ENCODE measurements at regions of chr2 and their contacts with region 1.

Region 1: DNA sequence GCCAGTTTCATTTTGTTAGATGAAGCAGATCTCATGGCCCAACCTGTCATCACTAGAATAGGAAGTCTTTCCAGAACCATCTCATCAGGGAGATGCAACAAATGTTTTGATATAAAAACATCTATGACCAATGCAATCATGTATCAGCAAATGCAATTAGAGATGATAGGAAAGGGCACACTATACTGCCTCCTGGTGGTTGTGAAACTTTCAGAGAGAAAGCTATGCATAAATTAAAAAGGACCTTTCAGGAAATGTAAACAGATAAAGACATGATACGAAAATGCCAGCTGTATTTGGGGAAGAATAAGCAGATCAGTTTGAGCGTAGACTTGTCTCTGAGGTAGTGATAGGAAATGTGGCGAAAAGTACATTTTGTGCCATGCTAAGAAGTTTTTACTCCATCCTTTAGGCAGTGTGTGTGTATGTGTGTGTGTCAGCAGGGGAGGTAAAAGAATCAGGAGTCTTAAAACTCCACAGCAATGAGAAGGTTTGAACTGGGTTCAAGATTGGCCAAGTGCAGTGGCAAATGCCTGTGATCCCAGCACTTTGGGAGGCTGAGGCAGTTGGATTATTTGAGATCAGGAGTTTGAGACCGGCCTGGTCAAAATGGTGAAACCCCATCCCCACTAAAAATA is 479.3 kb downstream of the CPS1 start:
- DNase-seq: peak; percentile 53
- H3K4me3 ChIP-seq: no peak overlapping the region
- H3K27ac ChIP-seq: no peak overlapping the region
- H3K4me1 ChIP-seq: no peaks in the 10 kb centered on the region
- H3K27me3 ChIP-seq: no peaks in the 10 kb centered on the region
- CTCF ChIP-seq: peak; percentile 43 to 56
- POLR2A ChIP-seq: no peak

Region 2: GRCh38 chr2:210503001-210503623 is 532.6 kb before region 1 on chr2:
- CTCF ChIA-PET with region 1: interaction called, 26 read pairs
- POLR2A ChIA-PET with region 1: no interaction called
- dilution Hi-C with region 1: no loop called
- intact Hi-C with region 1: loop called (anchors 5 kb)
- DNase-seq: peak; percentile 55
- H3K4me3 ChIP-seq: peak overlapping the region in 1 of 3 experiments; percentile 16
- H3K27ac ChIP-seq: no peak overlapping the region
- H3K4me1 ChIP-seq: no peaks in the 10 kb centered on the region
- H3K27me3 ChIP-seq: peaks cover 0 to 8% of the 10 kb centered on the region in 2 experiments
- CTCF ChIP-seq: peak; percentile 76 to 89
- POLR2A ChIP-seq: no peak

Region 3: DNA sequence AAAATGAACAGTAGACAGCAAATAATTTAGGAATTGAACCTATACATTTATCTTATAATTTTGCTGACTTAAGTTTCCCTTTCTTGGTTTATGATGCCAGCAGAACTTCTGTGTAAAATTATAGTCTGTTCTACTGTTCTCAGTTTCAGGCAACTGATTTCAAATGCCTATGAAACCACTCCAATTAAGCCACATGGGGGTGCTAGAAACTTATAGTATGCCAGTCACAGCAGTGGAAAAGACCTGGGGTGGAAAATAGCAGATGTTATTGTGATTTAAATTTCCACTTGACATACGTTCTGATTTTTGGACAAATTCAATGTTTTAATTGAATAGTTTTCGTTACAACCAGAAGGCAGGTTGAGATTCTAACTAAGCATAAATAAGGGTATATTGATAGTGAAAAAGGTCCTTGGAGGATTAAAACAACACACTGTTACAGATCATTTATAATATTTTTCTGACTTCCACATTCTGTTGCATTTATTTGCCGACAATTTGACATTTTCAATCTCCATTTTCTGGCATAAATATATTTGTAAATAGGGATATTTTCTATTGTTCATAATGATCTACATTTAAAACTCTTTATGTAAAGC is 417.8 kb before region 1 on chr2:
- CTCF ChIA-PET with region 1: interaction called, 89 read pairs
- POLR2A ChIA-PET with region 1: no interaction called
- dilution Hi-C with region 1: no loop called
- intact Hi-C with region 1: loop called (anchors 1 kb)
- DNase-seq: peak; percentile 37
- H3K4me3 ChIP-seq: no peak overlapping the region
- H3K27ac ChIP-seq: no peak overlapping the region
- H3K4me1 ChIP-seq: no peaks in the 10 kb centered on the region
- H3K27me3 ChIP-seq: no peaks in the 10 kb centered on the region
- CTCF ChIP-seq: peak; percentile 33 to 52
- POLR2A ChIP-seq: no peak

Region 4: DNA sequence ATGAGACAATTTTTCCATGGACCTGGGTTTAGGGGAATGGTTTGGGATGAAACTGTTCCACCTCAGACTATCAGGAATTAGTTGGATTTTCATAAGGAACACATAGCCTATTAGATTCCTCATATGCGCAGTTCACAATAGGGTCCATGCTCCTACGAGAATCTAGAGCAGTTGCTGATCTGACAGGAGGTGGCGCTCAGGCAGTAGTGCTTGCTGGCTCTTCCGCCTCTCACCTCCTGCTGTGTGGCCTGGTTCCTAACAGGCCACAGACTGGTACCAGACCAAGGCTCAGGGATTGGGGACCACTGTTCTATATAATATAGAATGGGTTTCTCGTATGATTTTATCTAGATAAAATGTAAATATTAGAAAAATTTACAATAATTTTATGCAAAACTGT is 140.5 kb before region 1 on chr2:
- CTCF ChIA-PET with region 1: interaction called, 3 read pairs
- POLR2A ChIA-PET with region 1: no interaction called
- dilution Hi-C with region 1: no loop called
- intact Hi-C with region 1: loop called (anchors 1 kb)
- DNase-seq: no peak
- H3K4me3 ChIP-seq: no peak overlapping the region
- H3K27ac ChIP-seq: no peak overlapping the region
- H3K4me1 ChIP-seq: no peaks in the 10 kb centered on the region
- H3K27me3 ChIP-seq: no peaks in the 10 kb centered on the region
- CTCF ChIP-seq: no peak
- POLR2A ChIP-seq: no peak

Region 5: GRCh38 chr2:211049321-211050018 is 13.8 kb after region 1 on chr2:
- CTCF ChIA-PET with region 1: interaction called, 22 read pairs
- POLR2A ChIA-PET with region 1: no interaction called
- dilution Hi-C with region 1: no loop called
- intact Hi-C with region 1: no loop called
- DNase-seq: no peak
- H3K4me3 ChIP-seq: no peak overlapping the region
- H3K27ac ChIP-seq: no peak overlapping the region
- H3K4me1 ChIP-seq: no peaks in the 10 kb centered on the region
- H3K27me3 ChIP-seq: no peaks in the 10 kb centered on the region
- CTCF ChIP-seq: no peak
- POLR2A ChIP-seq: no peak

Region 6: GRCh38 chr2:211103989-211104388 is 68.3 kb after region 1 on chr2:
- CTCF ChIA-PET with region 1: no interaction called
- POLR2A ChIA-PET with region 1: no interaction called
- dilution Hi-C with region 1: no loop called
- intact Hi-C with region 1: no loop called
- DNase-seq: no peak
- H3K4me3 ChIP-seq: no peak overlapping the region
- H3K27ac ChIP-seq: no peak overlapping the region
- H3K4me1 ChIP-seq: no peaks in the 10 kb centered on the region
- H3K27me3 ChIP-seq: no peaks in the 10 kb centered on the region
- CTCF ChIP-seq: no peak
- POLR2A ChIP-seq: no peak

Region 7: GRCh38 chr2:211237586-211238275 is 202.1 kb after region 1 on chr2:
- CTCF ChIA-PET with region 1: no interaction called
- POLR2A ChIA-PET with region 1: no interaction called
- dilution Hi-C with region 1: no loop called
- intact Hi-C with region 1: no loop called
- DNase-seq: no peak
- H3K4me3 ChIP-seq: no peak overlapping the region
- H3K27ac ChIP-seq: no peak overlapping the region
- H3K4me1 ChIP-seq: no peaks in the 10 kb centered on the region
- H3K27me3 ChIP-seq: no peaks in the 10 kb centered on the region
- CTCF ChIP-seq: no peak
- POLR2A ChIP-seq: no peak